ENCODE measurements at regions of chr15 and their contacts with region 1.

Region 1: DNA sequence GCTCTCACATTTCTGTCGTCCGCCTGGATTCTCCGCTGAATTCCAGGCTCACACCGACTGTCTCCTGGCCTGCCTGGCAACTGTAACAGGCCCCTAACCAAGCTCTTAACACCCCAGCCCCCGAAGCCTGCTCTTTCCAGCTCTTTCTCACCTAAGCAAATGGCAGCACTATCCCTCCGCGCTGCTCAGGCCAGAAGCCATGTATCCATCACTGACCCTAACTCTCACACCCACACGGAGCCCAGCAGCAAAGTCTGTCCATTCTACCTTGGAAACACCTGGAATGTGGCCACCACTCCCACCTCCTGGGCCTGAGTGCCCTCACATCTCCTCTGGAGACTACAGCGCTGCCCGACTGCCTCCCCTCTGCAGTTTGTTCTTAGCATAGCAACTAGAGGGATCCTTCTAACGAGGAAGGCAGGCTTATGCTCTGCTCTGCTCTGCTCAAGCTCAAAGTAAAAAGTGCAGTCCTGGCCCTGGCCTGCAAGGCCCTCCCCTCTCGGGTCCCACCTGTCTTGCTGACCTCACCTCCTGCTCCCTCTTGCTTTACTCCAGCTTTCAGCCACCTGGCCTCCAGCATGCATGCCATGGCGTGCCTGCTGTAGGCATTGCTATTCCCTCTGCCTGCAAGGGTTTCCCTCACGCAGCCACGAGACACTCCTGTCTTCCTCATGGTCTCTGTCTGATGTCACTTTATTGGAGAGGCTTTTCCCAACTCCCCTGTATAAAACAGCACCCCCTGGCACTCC is 27.2 kb downstream of the FEM1B start:
- DNase-seq: no peak
- H3K4me3 ChIP-seq: no peak overlapping the region
- H3K27ac ChIP-seq: no peak overlapping the region
- H3K4me1 ChIP-seq: peaks cover 3% of the 10 kb centered on the region
- H3K27me3 ChIP-seq: no peaks in the 10 kb centered on the region
- CTCF ChIP-seq: no peak
- POLR2A ChIP-seq: no peak

Region 2: DNA sequence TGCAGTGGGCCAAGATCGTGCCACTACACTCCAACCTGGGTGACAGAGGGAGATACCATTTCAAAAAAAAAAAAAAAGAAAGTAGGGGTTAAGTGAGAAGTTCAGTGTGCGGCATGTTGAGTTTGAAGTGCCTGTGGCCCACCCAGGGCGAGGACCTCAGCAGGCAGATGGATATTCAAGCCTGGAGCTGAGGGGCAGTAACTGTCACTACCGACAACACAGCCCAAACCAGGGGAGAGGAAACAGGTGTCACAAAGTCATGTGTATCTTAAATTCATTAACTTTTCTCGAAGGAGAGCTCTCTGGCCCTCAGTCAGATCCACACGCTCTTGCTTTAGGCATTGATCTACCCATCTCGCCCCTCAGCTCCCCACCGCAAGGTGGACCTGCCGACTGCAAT is 18.0 kb after region 1 on chr15:
- CTCF ChIA-PET with region 1: interaction called, 12 read pairs
- POLR2A ChIA-PET with region 1: no interaction called
- dilution Hi-C with region 1: no loop called
- intact Hi-C with region 1: no loop called
- DNase-seq: no peak
- H3K4me3 ChIP-seq: no peak overlapping the region
- H3K27ac ChIP-seq: no peak overlapping the region
- H3K4me1 ChIP-seq: no peaks in the 10 kb centered on the region
- H3K27me3 ChIP-seq: peaks cover 0 to 6% of the 10 kb centered on the region in 2 experiments
- CTCF ChIP-seq: no peak
- POLR2A ChIP-seq: no peak

Region 3: DNA sequence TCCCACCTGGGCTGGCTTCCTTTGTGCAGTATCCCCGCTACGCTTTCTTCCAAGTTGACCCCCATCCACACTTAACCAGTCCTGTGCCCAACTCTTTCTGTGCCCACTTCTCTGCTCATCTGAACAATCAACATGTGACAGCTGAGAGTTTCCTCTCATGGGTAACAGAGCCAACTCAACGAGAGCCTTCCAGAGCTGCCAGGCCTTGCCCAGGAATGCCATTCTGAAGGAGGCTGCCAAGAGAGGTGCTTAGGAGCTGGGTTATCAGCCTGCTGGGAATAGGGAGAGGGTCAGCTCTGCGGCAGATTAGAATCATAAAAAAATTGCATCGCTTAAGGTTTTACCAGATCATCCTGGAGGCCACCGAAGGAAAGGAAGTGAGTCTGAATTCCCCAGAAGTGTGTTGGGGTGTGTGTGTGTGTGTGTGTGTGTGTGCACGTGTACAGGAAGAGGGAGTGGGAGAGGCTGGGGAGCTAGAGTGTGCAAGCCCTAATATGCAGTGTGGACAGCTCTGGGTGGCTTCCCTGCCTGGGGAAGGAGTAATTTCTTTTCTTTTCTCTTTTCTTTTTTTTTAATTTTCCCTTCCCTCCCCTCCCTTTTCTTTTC is 60.5 kb after region 1 on chr15:
- CTCF ChIA-PET with region 1: interaction called, 53 read pairs
- POLR2A ChIA-PET with region 1: no interaction called
- dilution Hi-C with region 1: no loop called
- intact Hi-C with region 1: loop called (anchors 1 kb)
- DNase-seq: peak; percentile 57
- H3K4me3 ChIP-seq: no peak overlapping the region
- H3K27ac ChIP-seq: peak overlapping the region; percentile 28
- H3K4me1 ChIP-seq: peaks cover 45% of the 10 kb centered on the region
- H3K27me3 ChIP-seq: no peaks in the 10 kb centered on the region
- CTCF ChIP-seq: no peak
- POLR2A ChIP-seq: no peak

Region 4: DNA sequence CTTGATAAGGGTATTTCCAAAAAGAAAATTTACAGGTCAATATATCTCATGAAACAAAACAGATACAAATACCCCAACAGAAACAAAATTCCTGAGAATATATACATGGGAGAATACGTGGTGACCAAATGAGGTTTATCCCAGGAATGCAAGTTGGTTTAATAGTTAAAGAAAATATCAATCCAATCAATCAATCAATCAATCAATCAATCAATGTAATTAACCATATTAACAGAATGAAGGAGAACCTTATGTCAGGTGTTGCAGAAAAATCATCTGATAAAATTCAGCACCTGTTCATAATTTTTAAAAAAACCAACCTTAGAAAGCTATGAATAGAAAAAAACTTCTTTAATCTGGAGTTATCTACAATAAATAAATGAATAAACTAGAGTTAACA is 91.3 kb after region 1 on chr15:
- CTCF ChIA-PET with region 1: interaction called, 20 read pairs
- POLR2A ChIA-PET with region 1: no interaction called
- dilution Hi-C with region 1: no loop called
- intact Hi-C with region 1: no loop called
- DNase-seq: no peak
- H3K4me3 ChIP-seq: no peak overlapping the region
- H3K27ac ChIP-seq: no peak overlapping the region
- H3K4me1 ChIP-seq: peaks cover 11% of the 10 kb centered on the region
- H3K27me3 ChIP-seq: no peaks in the 10 kb centered on the region
- CTCF ChIP-seq: no peak
- POLR2A ChIP-seq: no peak

Region 5: GRCh38 chr15:68550481-68551295 is 245.9 kb after region 1 on chr15:
- CTCF ChIA-PET with region 1: interaction called, 128 read pairs
- POLR2A ChIA-PET with region 1: no interaction called
- dilution Hi-C with region 1: no loop called
- intact Hi-C with region 1: loop called (anchors 1 kb)
- DNase-seq: peak; percentile 41
- H3K4me3 ChIP-seq: no peak overlapping the region
- H3K27ac ChIP-seq: no peak overlapping the region
- H3K4me1 ChIP-seq: peaks cover 8% of the 10 kb centered on the region
- H3K27me3 ChIP-seq: peaks cover 5% of the 10 kb centered on the region in 2 experiments
- CTCF ChIP-seq: peak; percentile 80 to 87
- POLR2A ChIP-seq: no peak

Region 6: DNA sequence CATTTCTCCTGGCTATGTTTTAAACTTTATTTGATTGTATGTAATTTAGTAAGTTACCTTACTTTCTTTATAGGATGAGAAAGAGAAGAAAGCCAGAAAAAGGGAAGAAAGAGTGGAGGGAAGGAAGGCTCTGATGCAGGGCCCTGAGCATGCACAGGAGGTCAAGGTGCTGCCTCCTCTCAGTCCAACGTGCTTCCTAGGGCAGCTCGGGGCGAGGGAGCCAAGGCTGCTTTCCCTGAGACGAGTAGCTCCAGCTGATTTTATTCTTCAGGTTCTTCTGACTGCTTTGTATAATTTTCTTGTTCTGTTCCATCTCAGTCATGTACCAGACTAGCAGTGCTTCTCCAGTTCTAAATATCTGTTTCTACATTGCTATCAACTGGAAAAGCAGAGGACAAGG is 277.5 kb after region 1 on chr15:
- CTCF ChIA-PET with region 1: no interaction called
- POLR2A ChIA-PET with region 1: no interaction called
- dilution Hi-C with region 1: no loop called
- intact Hi-C with region 1: no loop called
- DNase-seq: no peak
- H3K4me3 ChIP-seq: no peak overlapping the region
- H3K27ac ChIP-seq: no peak overlapping the region
- H3K4me1 ChIP-seq: peaks cover 22% of the 10 kb centered on the region
- H3K27me3 ChIP-seq: peaks cover 5 to 10% of the 10 kb centered on the region in 2 experiments
- CTCF ChIP-seq: no peak
- POLR2A ChIP-seq: no peak

Region 7: GRCh38 chr15:68875377-68876116 is 570.8 kb after region 1 on chr15:
- CTCF ChIA-PET with region 1: interaction called, 32 read pairs
- POLR2A ChIA-PET with region 1: no interaction called
- dilution Hi-C with region 1: no loop called
- intact Hi-C with region 1: loop called (anchors 1 kb)
- DNase-seq: peak; percentile 91
- H3K4me3 ChIP-seq: peak overlapping the region in 2 of 3 experiments; percentile 6 to 24
- H3K27ac ChIP-seq: no peak overlapping the region
- H3K4me1 ChIP-seq: no peaks in the 10 kb centered on the region
- H3K27me3 ChIP-seq: peaks cover 7 to 9% of the 10 kb centered on the region in 2 experiments
- CTCF ChIP-seq: peak; percentile 83 to 84
- POLR2A ChIP-seq: no peak

Measured in endothelial cell of umbilical vein (primary cell).